ENCODE measurements at regions of chr5 and their contacts with region 1.

Region 1: DNA sequence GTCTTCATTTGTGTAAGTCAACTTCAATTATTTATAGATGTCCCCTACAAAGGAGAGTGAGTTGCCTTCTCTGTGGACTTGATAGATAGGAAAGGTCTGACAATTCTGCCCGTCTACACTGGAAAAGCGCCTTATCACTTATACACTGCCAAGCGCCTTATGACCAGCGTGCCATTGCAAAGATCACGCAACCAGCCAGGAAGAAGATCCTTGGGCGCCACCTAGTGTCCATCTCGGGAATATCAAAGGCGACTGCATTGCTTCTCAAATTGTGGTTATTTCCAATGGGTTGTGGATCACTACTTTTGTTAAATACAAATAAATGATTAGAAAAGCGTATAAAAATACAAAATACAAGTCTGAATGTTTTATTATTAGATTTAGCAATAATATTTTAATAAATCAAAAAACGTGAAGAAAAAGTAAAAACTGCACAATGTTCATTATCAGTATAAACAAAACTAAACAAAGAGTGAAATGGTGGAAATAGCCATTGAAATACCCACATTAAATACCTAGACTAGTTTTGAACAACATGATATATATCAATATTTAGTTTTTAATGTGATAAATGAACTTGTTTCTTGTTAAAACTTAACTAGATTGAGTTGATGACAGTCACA is 27.8 kb downstream of the SUB1 start:
- DNase-seq: peak; percentile 66
- ATAC-seq: peak; percentile 76
- H3K4me3 Mint-ChIP-seq: no peak overlapping the region
- H3K27ac Mint-ChIP-seq: no peak overlapping the region
- H3K4me1 Mint-ChIP-seq: peaks cover 2% of the 10 kb centered on the region
- H3K27me3 Mint-ChIP-seq: no peaks in the 10 kb centered on the region
- CTCF ChIP-seq: peak; percentile 53

Region 2: GRCh38 chr5:32232441-32233219 is 380.5 kb before region 1 on chr5:
- CTCF ChIA-PET with region 1: interaction called, 23 read pairs
- POLR2A ChIA-PET with region 1: no interaction called
- intact Hi-C with region 1: loop called (anchors 1 kb)
- DNase-seq: peak; percentile 62
- ATAC-seq: peak; percentile 87
- H3K4me3 Mint-ChIP-seq: no peak overlapping the region
- H3K27ac Mint-ChIP-seq: peak overlapping the region; percentile 10
- H3K4me1 Mint-ChIP-seq: peaks cover 21% of the 10 kb centered on the region
- H3K27me3 Mint-ChIP-seq: no peaks in the 10 kb centered on the region
- CTCF ChIP-seq: no peak

Region 3: DNA sequence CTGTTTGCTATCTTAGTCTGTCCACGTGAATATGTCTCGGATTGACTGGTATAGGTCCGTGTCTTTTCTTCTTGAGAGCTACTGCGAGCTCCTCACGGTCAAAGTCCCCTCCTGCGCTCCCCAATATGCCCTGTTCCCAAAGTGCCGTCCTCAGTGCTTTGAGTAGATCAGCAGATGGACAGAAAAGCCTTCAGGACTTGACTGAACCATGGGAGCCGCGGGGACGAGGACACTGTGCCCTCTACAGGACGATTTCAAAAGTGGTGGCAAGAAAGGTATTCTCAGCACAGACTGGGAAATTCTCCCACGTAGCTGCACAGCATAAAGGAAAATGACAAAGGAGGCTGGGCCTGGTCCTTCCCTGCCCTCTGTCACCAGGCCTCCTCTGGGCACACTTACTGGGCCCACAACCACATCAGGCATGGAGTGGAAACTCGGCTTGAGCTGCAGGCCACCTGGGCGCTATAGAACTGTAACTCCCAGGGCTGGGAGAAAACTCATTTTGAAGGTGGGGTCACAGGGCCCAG is 283.8 kb before region 1 on chr5:
- CTCF ChIA-PET with region 1: no interaction called
- POLR2A ChIA-PET with region 1: no interaction called
- intact Hi-C with region 1: loop called (anchors 2 kb)
- DNase-seq: peak; percentile 21
- ATAC-seq: peak; percentile 87
- H3K4me3 Mint-ChIP-seq: no peak overlapping the region
- H3K27ac Mint-ChIP-seq: no peak overlapping the region
- H3K4me1 Mint-ChIP-seq: peaks cover 2% of the 10 kb centered on the region
- H3K27me3 Mint-ChIP-seq: no peaks in the 10 kb centered on the region
- CTCF ChIP-seq: no peak

Region 4: GRCh38 chr5:32419791-32420190 is 193.4 kb before region 1 on chr5:
- CTCF ChIA-PET with region 1: interaction called, 3 read pairs
- POLR2A ChIA-PET with region 1: no interaction called
- intact Hi-C with region 1: loop called (anchors 5 kb)
- DNase-seq: no peak
- ATAC-seq: no peak
- H3K4me3 Mint-ChIP-seq: no peak overlapping the region
- H3K27ac Mint-ChIP-seq: no peak overlapping the region
- H3K4me1 Mint-ChIP-seq: peaks cover 27% of the 10 kb centered on the region
- H3K27me3 Mint-ChIP-seq: no peaks in the 10 kb centered on the region
- CTCF ChIP-seq: no peak

Region 5: GRCh38 chr5:33423018-33423630 is 810.0 kb after region 1 on chr5:
- CTCF ChIA-PET with region 1: no interaction called
- POLR2A ChIA-PET with region 1: no interaction called
- intact Hi-C with region 1: loop called (anchors 1 kb)
- DNase-seq: no peak
- ATAC-seq: no peak
- H3K4me3 Mint-ChIP-seq: no peak overlapping the region
- H3K27ac Mint-ChIP-seq: no peak overlapping the region
- H3K4me1 Mint-ChIP-seq: no peaks in the 10 kb centered on the region
- H3K27me3 Mint-ChIP-seq: peaks cover 10% of the 10 kb centered on the region
- CTCF ChIP-seq: no peak

Measured in activated B cell treated with CpG ODN at 0.5 μM for 24 hours (primary cell).